Heart right ventricle (tissue), 16 donors: ENCODE measurements at regions of chr17 and their contacts with region 1.

Region 1: DNA sequence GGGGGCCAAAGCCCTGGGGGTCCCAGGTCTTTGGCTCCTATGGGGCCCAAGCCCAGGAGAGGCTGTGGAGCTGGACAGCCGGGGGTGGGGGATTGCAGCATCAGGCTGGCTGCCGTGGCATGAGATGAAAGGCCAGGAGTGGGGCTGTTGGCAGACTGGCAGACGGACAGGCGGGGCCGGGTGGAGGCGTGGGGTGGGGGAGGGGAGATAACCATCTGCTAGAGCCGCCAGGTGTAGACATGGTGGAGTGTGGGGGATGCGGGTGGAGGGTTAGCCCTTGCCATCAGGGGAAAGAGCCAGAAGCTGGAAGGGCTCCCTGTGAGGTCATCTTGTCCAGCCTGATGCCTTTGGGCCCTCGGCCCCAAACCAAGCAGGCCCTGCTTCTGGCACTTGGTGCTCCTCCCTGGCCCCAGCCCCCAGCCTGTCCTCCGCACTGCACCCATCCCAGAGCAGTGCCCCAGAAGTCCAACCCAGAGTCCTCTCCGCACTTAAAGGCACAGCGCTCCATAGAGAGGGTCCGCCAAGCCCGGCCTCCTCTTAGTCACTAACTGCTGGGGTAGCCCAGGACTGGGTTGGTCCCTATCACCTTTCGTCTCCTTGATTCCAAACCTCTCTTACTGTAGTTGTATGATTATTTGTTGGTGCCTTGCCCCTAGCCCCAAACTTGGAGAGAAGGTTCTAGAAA is 33.3 kb upstream of the DLX4 start:
- DNase-seq: no peak
- ATAC-seq: no peak
- H3K4me3 ChIP-seq: no peak overlapping the region
- H3K27ac ChIP-seq: no peak overlapping the region
- H3K4me1 ChIP-seq: no peaks in the 10 kb centered on the region
- H3K27me3 ChIP-seq: peaks cover 0 to 59% (median 42%) of the 10 kb centered on the region in 7 donors
- CTCF ChIP-seq: no peak

Region 2: DNA sequence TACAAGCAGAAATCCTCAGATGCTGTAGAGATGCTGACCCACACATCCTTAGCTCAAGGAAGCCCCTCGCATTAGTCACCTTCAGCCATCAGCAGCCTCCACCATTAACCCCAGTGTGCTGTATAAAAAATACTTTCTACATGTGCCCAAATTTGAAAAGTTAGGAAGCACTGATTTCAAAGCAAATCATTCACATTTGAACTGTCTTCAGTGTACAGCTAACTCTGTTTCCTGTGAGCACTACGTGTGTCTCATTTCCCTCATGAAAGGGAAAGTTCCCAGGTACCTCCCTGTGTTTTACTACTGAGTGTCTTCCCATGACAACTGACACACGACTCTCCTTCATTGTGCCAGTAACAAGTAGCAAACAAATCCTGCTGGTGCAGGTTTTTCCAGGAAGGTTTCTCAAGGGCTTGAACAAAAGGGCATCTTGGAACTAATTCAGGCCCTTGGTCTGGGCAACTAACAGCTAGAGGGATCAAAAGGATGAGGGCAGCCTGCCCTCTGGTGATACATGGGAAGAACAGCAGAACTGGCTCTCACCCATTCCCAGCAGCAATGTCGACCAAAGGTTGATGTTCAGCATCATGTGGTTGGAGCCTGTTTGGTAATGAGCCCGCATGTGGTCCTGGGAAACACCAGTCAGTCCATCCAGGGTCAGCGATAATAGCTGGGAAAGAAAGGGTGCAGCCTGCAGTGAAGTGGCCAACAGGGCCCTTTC is 232.0 kb before region 1 on chr17:
- intact Hi-C with region 1: no loop called
- DNase-seq: no peak
- ATAC-seq: peak in 2 of 8 donors; percentile 10 to 24
- H3K4me3 ChIP-seq: no peak overlapping the region
- H3K27ac ChIP-seq: peak overlapping the region in 1 of 10 donors; percentile 61
- H3K4me1 ChIP-seq: peaks cover 6 to 55% (median 23%) of the 10 kb centered on the region in 9 donors
- H3K27me3 ChIP-seq: no peaks in the 10 kb centered on the region
- CTCF ChIP-seq: peak; percentile 17 to 66 (median 50)

Region 3: GRCh38 chr17:49830605-49831004 is 105.1 kb before region 1 on chr17:
- intact Hi-C with region 1: no loop called
- DNase-seq: no peak
- ATAC-seq: no peak
- H3K4me3 ChIP-seq: no peak overlapping the region
- H3K27ac ChIP-seq: no peak overlapping the region
- H3K4me1 ChIP-seq: peaks cover 0 to 76% (median 36%) of the 10 kb centered on the region in 9 donors
- H3K27me3 ChIP-seq: no peaks in the 10 kb centered on the region
- CTCF ChIP-seq: no peak

Region 4: GRCh38 chr17:49873466-49873865 is 62.2 kb before region 1 on chr17:
- intact Hi-C with region 1: loop called in 1 of 10 experiments (anchors 10 kb)
- DNase-seq: no peak
- ATAC-seq: no peak
- H3K4me3 ChIP-seq: no peak overlapping the region
- H3K27ac ChIP-seq: no peak overlapping the region
- H3K4me1 ChIP-seq: no peaks in the 10 kb centered on the region
- H3K27me3 ChIP-seq: peaks cover 0 to 30% (median 11%) of the 10 kb centered on the region in 7 donors
- CTCF ChIP-seq: no peak

Region 5: GRCh38 chr17:49973675-49974074 is 38.0 kb after region 1 on chr17:
- intact Hi-C with region 1: loop called in 1 of 10 experiments (anchors 1 kb)
- DNase-seq: no peak
- ATAC-seq: no peak
- H3K4me3 ChIP-seq: no peak overlapping the region
- H3K27ac ChIP-seq: no peak overlapping the region
- H3K4me1 ChIP-seq: peaks cover 10 to 34% (median 24%) of the 10 kb centered on the region in 9 donors
- H3K27me3 ChIP-seq: peaks cover 36 to 100% (median 96%) of the 10 kb centered on the region in 7 donors
- CTCF ChIP-seq: no peak